ENCODE measurements at regions of chr5 and their contacts with region 1.

Region 1: DNA sequence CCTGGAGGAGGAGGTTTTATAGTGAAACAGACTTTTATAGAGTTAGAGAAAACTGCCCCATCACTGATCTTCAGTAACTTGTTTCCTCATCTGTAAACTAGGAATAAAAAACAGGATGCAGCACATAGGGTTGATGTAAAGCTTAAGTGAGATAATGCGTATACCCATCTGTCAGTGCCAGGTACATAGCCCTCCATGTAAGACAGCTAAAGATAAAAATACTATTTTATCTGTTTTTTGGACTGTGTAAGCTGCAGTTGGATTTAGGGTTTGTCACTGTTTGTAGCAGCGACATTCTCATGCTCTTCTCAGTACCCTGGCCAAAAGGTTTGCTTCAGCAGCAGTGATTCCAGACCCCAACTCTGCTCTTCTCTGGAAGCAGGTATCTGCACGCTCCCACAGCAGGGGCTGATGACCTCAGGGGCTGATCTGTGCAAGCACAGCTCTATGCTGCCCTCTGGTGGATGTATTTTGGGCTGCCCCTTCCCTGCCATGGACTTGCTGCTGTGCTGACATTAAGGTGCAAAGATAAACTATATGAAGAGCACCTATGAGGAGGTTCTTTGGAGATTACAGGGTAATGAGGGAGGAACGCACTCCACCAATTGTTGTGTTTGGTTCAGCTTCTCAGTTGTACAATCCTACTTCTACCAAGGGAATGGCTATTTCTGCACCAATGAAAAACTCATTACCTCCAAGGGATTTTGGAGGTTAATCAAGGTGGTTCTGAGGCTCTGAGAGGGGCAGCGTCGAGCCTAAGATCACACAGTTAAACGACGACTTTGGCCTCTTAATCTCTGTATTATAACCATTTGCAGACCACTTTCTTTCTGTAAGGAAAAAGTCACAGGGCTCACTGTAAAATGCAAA is 13.1 kb downstream of the HMHB1 start:
- DNase-seq: peak; percentile 70
- ATAC-seq: peak; percentile 99
- H3K4me3 Mint-ChIP-seq: no peak overlapping the region
- H3K27ac Mint-ChIP-seq: no peak overlapping the region
- H3K4me1 Mint-ChIP-seq: peaks cover 5% of the 10 kb centered on the region
- H3K27me3 Mint-ChIP-seq: no peaks in the 10 kb centered on the region
- CTCF ChIP-seq: peak; percentile 90

Region 2: DNA sequence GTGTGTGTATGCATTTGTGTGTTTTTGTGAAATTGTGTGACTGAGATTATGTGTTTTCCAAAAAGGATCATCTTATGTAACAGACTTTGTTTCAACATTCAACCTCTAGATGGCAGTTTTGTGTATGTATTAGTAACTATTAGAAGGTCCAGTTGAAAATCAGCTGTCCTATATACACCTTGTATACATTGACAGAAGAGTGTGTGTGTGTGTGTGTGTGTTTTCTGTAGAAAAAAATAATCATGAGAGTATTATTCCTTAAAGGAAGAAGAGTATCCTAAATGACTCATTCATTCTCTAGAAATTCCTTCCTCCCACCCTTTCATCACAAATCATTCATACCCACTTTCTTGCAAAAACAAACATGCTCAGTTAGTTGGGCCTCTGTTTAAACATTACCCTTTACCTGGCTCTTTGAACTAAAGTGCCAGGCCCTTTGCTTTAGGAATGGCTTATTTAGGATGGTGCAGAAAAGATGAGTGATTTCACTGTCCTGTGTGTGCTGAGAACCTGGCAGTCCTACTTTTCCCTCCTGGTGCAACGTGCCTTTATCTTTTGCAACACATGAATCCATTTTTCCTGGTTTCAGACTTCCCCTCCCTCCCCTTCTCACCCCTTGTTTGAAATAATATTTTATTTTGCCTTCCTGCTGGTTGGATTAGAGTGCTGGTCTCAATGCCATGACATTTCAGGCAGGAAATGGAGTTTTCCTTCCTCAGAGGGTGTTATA is 902.7 kb before region 1 on chr5:
- CTCF ChIA-PET with region 1: interaction called, 64 read pairs
- POLR2A ChIA-PET with region 1: no interaction called
- intact Hi-C with region 1: loop called (anchors 1 kb)
- DNase-seq: no peak
- ATAC-seq: no peak
- H3K4me3 Mint-ChIP-seq: no peak overlapping the region
- H3K27ac Mint-ChIP-seq: no peak overlapping the region
- H3K4me1 Mint-ChIP-seq: peaks cover 7% of the 10 kb centered on the region
- H3K27me3 Mint-ChIP-seq: no peaks in the 10 kb centered on the region
- CTCF ChIP-seq: no peak

Region 3: DNA sequence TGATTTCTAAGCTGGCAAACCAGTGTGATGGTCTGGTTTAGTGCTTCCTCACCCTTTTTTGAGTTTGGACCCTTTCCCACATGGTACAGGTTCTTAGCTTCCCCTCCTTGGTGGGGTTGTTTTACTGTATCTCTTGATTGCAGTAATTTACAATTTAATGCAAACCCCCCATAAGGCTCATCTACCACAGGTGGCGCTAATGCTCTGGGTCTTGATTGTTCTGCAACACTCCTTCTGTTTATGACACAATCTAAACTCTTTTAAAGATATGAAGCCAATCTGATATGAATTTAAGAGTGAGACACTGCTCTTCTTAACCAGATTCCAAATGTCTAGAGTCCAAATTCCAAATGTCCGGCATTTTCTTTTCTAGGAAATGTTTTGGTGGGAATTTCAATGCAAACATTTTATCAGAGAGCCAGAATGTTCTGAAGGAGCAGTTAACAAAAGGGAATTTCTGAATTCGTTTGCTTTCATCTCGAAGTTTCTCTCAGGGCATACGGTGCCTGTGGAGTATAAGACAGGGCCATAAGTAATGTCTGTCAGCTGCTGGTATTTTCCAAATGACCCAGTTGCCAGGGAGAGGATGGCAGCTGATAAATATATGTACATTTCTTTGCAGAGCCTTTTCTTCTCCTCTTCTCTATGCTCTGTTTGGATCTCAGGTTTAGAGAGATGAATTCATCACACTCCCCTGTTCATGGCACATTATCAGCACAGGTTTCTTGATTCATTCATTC is 808.1 kb before region 1 on chr5:
- CTCF ChIA-PET with region 1: interaction called, 4 read pairs
- POLR2A ChIA-PET with region 1: no interaction called
- intact Hi-C with region 1: loop called (anchors 1 kb)
- DNase-seq: no peak
- ATAC-seq: peak; percentile 58
- H3K4me3 Mint-ChIP-seq: no peak overlapping the region
- H3K27ac Mint-ChIP-seq: no peak overlapping the region
- H3K4me1 Mint-ChIP-seq: peaks cover 14% of the 10 kb centered on the region
- H3K27me3 Mint-ChIP-seq: no peaks in the 10 kb centered on the region
- CTCF ChIP-seq: no peak

Region 4: DNA sequence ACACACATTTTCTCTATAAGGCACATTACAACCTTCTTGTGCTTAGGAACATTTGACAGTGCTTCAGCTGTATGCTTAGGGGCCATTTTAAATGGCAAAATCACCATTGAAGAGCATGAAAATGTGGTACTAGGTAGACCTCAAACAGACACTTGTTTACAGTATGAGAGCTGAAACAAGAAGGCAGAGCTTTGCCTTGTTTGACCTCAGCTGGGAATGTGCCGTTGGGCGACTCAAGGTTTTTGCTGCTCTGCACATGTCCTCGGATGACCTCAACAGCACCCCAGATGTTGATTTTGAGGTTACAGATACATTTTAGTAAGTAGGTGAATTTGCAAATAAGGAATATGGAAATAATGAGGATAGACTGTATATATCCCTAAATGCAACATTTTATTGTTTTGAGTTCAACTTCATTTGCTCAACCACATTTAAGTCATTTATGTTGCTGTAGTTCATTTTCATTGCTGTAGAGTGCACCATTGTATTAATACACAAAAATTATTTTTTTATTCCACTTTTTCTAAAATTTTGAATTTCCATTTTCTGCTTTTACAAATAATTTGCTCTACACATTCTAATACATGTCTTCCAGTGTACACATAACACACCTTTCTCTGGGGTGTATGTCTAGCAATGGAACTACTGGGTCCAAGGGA is 628.4 kb before region 1 on chr5:
- CTCF ChIA-PET with region 1: interaction called, 3 read pairs
- POLR2A ChIA-PET with region 1: no interaction called
- intact Hi-C with region 1: loop called (anchors 1 kb)
- DNase-seq: no peak
- ATAC-seq: no peak
- H3K4me3 Mint-ChIP-seq: no peak overlapping the region
- H3K27ac Mint-ChIP-seq: no peak overlapping the region
- H3K4me1 Mint-ChIP-seq: no peaks in the 10 kb centered on the region
- H3K27me3 Mint-ChIP-seq: no peaks in the 10 kb centered on the region
- CTCF ChIP-seq: no peak

Region 5: GRCh38 chr5:143314659-143315058 is 510.4 kb before region 1 on chr5:
- CTCF ChIA-PET with region 1: no interaction called
- POLR2A ChIA-PET with region 1: no interaction called
- intact Hi-C with region 1: loop called (anchors 10 kb)
- DNase-seq: no peak
- ATAC-seq: no peak
- H3K4me3 Mint-ChIP-seq: no peak overlapping the region
- H3K27ac Mint-ChIP-seq: peak overlapping the region; percentile 68
- H3K4me1 Mint-ChIP-seq: peaks cover 68% of the 10 kb centered on the region
- H3K27me3 Mint-ChIP-seq: no peaks in the 10 kb centered on the region
- CTCF ChIP-seq: no peak

Region 6: DNA sequence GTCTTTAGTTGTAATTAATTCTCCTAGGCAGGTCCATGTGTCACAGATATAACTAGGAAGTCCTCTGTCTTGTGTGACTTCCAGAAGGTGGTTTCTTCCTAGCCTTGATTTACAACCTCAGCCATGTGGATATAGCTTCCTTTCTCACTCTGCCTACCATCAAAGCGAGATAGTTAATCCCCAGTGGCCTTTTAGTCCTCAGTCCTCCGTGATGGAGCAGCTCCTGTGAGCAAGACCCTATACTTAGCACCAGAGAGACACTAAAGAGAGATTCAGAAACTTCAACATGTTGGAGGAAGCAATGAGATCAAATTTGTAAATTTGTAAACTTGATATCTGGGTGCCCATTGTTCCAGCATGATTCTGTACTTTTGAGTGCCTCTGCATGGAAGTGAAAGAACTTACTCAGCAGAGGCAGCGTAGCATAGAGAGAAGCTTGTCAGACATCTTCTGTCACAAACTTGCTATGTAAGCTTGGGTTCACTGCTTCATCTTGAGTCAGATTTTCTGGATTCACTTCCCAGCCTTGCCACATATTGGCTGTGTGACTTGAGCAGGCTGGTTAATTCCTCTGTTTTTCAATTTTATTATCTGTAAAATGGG is 251.4 kb before region 1 on chr5:
- CTCF ChIA-PET with region 1: interaction called, 10 read pairs
- POLR2A ChIA-PET with region 1: no interaction called
- intact Hi-C with region 1: no loop called
- DNase-seq: no peak
- ATAC-seq: peak; percentile 85
- H3K4me3 Mint-ChIP-seq: no peak overlapping the region
- H3K27ac Mint-ChIP-seq: no peak overlapping the region
- H3K4me1 Mint-ChIP-seq: peaks cover 14% of the 10 kb centered on the region
- H3K27me3 Mint-ChIP-seq: no peaks in the 10 kb centered on the region
- CTCF ChIP-seq: no peak

Region 7: GRCh38 chr5:143648696-143649095 is 176.4 kb before region 1 on chr5:
- CTCF ChIA-PET with region 1: no interaction called
- POLR2A ChIA-PET with region 1: no interaction called
- intact Hi-C with region 1: no loop called
- DNase-seq: no peak
- ATAC-seq: no peak
- H3K4me3 Mint-ChIP-seq: no peak overlapping the region
- H3K27ac Mint-ChIP-seq: no peak overlapping the region
- H3K4me1 Mint-ChIP-seq: no peaks in the 10 kb centered on the region
- H3K27me3 Mint-ChIP-seq: no peaks in the 10 kb centered on the region
- CTCF ChIP-seq: no peak

Region 8: DNA sequence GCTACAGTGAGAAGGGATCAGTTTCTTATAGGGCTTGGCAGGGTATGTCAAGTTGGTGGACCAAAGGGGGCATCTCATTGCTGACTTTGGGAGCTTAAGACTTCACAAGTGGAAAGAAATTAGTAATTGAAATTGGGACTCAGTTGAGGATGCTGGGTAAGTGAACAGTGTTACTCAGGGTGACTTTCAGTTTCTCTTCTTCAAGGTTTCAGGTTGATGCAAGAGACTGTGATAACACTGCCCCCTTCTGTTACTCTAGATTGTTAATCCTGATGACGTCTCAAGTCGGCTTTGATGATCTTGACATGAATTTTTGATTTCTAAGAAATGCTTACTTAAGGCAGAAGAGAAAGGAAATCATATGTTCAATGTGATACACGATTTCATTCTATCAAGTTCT is 366.9 kb after region 1 on chr5:
- CTCF ChIA-PET with region 1: interaction called, 32 read pairs
- POLR2A ChIA-PET with region 1: no interaction called
- intact Hi-C with region 1: loop called (anchors 1 kb)
- DNase-seq: no peak
- ATAC-seq: peak; percentile 75
- H3K4me3 Mint-ChIP-seq: no peak overlapping the region
- H3K27ac Mint-ChIP-seq: no peak overlapping the region
- H3K4me1 Mint-ChIP-seq: peaks cover 36% of the 10 kb centered on the region
- H3K27me3 Mint-ChIP-seq: no peaks in the 10 kb centered on the region
- CTCF ChIP-seq: no peak

Measured in activated B cell treated with CpG ODN at 0.5 μM for 24 hours (primary cell).